ENCODE measurements at regions of chr3 and their contacts with region 1.

Region 1: DNA sequence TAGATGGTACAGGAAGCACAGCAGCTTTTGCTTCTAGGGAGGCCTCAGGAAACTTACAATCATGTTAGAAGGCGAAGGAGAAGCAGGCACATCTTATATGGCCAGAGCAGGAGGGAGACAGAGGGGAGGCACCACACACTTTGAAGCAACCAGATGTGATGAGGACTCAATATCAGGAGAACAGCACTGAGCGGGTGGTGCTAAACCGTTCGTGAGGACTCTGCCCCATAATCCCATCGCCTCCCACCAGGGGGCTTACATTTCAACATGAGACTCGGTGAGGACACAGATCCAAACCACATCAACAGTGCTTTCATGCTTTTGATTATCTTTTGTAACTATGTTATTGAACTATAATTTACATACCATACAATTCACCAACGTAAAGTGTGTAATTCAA is 7.6 kb upstream of the TMEM44 start:
- DNase-seq: peak; percentile 79
- H3K4me3 ChIP-seq: peak overlapping the region in 1 of 3 experiments; percentile 14
- H3K27ac ChIP-seq: peak overlapping the region; percentile 91
- H3K4me1 ChIP-seq: peaks cover 35% of the 10 kb centered on the region
- H3K27me3 ChIP-seq: no peaks in the 10 kb centered on the region
- CTCF ChIP-seq: peak; percentile 49 to 61
- POLR2A ChIP-seq: no peak

Region 2: DNA sequence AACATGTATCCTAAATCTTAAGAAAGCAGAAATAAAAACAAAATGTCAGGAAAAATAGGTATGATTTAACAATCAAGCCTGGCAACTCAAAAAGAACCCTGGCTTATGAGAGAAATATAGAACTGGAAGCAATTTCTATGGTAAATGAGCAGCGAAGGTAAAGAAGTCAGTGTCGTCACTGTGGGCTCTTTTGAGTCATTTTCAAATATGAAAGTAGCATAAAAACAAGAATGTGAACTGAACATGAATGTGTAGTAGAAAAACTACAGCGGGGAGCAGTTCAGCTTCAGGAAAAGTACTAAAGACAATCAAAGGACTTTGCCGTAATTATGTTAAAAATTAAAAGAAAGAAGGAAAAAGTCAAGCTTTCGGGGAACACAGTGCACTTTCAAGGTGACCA is 13.6 kb after region 1 on chr3:
- CTCF ChIA-PET with region 1: interaction called, 22 read pairs
- POLR2A ChIA-PET with region 1: interaction called, 7 read pairs
- dilution Hi-C with region 1: no loop called
- intact Hi-C with region 1: loop called (anchors 1 kb)
- DNase-seq: no peak
- H3K4me3 ChIP-seq: no peak overlapping the region
- H3K27ac ChIP-seq: no peak overlapping the region
- H3K4me1 ChIP-seq: peaks cover 19% of the 10 kb centered on the region
- H3K27me3 ChIP-seq: no peaks in the 10 kb centered on the region
- CTCF ChIP-seq: no peak
- POLR2A ChIP-seq: no peak

Region 3: DNA sequence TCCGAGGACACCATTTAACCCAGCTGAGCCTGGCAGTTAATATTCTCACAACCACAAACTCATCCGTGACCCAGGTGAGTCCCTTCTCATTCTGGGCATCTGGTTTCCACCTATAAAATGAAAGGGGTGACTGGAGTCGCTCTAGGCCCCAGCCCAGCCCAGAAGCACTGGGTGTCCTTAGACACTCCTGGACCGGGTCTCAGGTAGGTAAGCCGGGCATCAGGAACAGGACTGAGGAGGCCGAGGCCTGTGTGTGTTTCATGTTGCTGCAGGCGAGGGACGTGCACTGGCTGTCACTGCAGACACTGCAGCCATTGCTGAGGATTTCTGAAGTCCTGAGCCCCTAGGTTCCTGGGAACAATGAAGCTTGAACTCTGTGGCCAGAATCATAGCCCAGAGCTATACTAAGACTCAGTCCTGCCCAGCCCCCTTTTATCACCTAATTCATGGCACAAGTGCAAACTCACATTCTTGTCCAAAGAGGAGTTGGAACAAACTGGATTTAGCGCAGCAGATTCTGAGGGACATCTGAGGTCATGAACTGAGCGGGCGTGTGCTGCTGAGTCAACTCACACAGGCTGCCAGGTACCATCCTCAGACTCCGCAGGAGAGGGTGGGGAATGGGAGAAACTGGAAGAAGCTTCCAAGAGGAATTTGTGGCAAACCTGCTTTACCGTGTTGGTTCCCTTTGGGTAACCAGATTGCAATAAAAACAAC is 229.7 kb after region 1 on chr3:
- CTCF ChIA-PET with region 1: no interaction called
- POLR2A ChIA-PET with region 1: no interaction called
- dilution Hi-C with region 1: no loop called
- intact Hi-C with region 1: no loop called
- DNase-seq: no peak
- H3K4me3 ChIP-seq: no peak overlapping the region
- H3K27ac ChIP-seq: peak overlapping the region; percentile 73
- H3K4me1 ChIP-seq: peaks cover 50% of the 10 kb centered on the region
- H3K27me3 ChIP-seq: no peaks in the 10 kb centered on the region
- CTCF ChIP-seq: no peak
- POLR2A ChIP-seq: no peak